Posterior cingulate gyrus (tissue), 11 donors: ENCODE measurements at regions of chr1 and their contacts with region 1.

Region 1: DNA sequence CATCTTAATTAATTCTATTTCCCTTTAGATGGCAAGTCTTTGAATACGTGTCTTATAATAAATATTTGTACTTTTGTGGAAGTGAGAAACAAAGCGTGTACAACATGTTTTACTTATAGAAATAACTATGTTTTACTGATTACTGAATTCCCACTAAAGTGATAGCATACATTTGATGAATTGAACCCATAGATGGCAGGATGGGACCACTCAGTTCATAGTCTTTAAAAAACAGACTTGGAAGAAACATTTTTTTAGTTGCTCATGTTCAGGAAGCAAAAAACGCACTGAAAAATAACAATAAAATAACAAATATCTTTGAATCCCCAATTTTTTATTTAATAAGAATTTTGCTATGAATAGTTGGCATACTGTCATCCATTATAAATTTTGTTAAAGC is 507.1 kb upstream of the ZRANB2 start:
- DNase-seq: no peak

Region 2: DNA sequence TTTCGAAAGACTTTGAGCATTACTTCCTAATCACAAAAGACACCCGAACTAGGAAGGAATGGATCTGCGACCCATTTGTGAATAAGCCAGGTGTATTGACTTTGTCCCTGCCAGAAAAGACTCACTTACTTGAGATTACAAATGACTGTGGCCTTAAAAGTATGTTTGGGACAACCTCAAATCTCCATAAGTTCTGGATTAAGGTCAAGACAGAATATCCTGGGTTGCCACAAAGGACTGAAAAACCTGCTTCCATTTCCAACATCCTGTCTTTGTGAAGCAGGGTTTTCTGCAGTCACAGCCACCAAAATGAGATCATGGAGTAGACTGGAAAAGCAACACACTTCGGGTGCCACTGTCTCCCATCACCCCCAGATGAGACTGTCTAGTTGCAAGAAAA is 30.2 kb after region 1 on chr1:
- intact Hi-C with region 1: no loop called
- DNase-seq: no peak

Region 3: DNA sequence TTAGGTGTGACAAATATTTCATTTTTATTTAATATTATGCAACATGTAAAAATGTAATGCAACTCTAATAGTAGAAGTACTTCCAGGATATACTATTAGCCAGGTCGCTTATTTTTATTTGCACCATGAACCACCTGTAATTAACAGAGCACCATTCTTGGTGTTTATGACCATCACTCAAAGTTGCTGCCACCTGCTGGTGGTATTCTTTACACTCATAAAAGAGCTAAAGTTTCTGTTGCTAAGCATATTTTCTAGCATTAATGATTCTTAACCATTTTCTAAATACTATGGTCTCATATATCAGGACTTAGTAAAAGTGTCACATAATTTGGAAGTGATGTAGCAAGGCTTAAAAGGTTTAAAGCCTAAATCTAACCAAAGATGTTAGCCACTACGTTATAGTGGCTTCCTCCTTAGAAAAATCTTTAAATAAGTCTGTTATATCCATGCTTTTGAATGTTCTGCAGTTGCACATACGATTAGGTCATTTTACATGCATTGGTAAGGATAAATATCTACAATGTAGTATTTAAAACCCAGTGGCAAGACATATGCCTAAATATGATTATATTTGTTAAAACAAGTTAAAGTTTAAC is 449.9 kb after region 1 on chr1:
- intact Hi-C with region 1: loop called (anchors 5 kb)
- DNase-seq: peak in 4 of 10 donors; percentile 6 to 36 (median 16)